ENCODE measurements at regions of chr12 and their contacts with region 1.

Region 1: DNA sequence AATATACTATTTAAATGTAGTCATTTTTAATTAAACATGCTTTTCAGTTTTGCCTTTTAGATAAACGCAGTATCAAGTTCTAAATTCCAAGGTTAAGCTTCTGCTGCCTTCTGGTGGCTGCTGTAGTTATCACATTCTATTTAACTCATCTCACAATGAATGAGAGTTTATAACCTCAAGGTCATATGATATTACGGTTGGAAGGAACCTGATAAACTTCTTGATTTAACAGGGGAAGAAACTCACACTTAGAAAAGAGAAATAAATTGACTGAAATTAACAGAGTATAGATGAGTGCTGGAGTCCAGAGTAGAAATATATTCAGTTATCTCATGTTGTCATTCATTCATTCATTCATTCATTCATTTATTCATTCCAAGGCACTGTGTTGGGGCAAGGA is 31.9 kb downstream of the GUCY2C start:
- DNase-seq: peak in 6 of 9 experiments; percentile 7 to 66 (median 36)
- ATAC-seq: peak; percentile 85
- H3K4me3 ChIP-seq: no peak overlapping the region
- H3K4me3 Mint-ChIP-seq: no peak overlapping the region
- H3K27ac ChIP-seq: no peak overlapping the region
- H3K27ac Mint-ChIP-seq: no peak overlapping the region
- H3K4me1 ChIP-seq: no peaks in the 10 kb centered on the region
- H3K4me1 Mint-ChIP-seq: peaks cover 5% of the 10 kb centered on the region
- H3K27me3 ChIP-seq: no peaks in the 10 kb centered on the region
- H3K27me3 Mint-ChIP-seq: peaks cover 5% of the 10 kb centered on the region
- CTCF ChIP-seq: peak; percentile 87

Region 2: DNA sequence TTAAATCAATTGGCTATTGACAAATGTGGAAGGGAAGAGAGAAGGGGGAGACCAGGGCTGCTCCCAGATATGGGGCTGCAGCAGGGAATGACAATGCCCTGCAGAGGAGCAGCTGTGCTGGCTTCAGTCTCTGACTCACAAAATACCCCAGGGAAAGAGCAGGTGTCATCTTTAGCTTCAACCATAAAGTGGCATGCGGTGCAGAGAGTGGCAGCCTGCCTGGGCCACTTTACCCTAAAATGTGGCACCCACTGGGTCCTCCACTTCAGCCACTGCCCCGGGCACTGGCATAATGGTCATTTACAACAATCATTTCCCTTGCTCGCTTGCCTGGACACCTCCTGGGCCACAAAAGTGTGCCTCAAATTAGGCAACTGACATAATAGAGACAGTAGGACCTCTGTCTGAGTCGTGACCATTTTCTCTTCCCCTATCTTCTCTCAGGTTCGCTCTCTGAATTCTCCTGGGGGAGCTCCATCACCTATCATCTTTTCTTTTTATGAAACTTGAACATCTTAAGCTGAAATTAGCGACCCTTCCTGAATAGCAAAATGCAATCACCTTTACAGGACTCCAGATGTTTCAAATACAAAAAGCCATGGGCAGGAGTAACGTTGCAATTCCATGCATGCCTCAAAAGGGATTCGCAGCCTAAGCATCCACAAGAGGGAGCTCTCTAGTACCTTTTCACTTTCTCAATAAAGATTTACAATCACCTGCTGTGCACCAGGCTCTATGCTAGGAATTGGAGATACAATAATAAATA is 478.9 kb before region 1 on chr12:
- CTCF ChIA-PET with region 1: interaction called, 3 read pairs
- POLR2A ChIA-PET with region 1: no interaction called
- intact Hi-C with region 1: loop called in 1 of 2 experiments (anchors 5 kb)
- DNase-seq: peak in 4 of 9 experiments; percentile 11 to 53 (median 27)
- ATAC-seq: no peak
- H3K4me3 ChIP-seq: no peak overlapping the region
- H3K4me3 Mint-ChIP-seq: no peak overlapping the region
- H3K27ac ChIP-seq: no peak overlapping the region
- H3K27ac Mint-ChIP-seq: no peak overlapping the region
- H3K4me1 ChIP-seq: no peaks in the 10 kb centered on the region
- H3K4me1 Mint-ChIP-seq: peaks cover 3% of the 10 kb centered on the region
- H3K27me3 ChIP-seq: no peaks in the 10 kb centered on the region
- H3K27me3 Mint-ChIP-seq: peaks cover 21% of the 10 kb centered on the region
- CTCF ChIP-seq: peak; percentile 59

Measured in CD8-positive, alpha-beta T cell (primary cell).